ENCODE measurements at regions of chr2 and their contacts with region 1.

Region 1: GRCh38 chr2:226320076-226320948 is 479.3 kb downstream of the IRS1 start:
- DNase-seq: peak; percentile 69 to 85
- ATAC-seq: peak; percentile 98 to 99
- H3K4me3 ChIP-seq: peak overlapping the region in 3 of 4 donors; percentile 27 to 43 (median 29)
- H3K27ac ChIP-seq: peak overlapping the region; percentile 81 to 91 (median 86)
- H3K4me1 ChIP-seq: peaks cover 21 to 26% of the 10 kb centered on the region in 2 donors
- H3K27me3 ChIP-seq: no peaks in the 10 kb centered on the region
- CTCF ChIP-seq: peak in 4 of 5 experiments; percentile 20 to 64 (median 42)
- POLR2A ChIP-seq: no peak

Region 2: GRCh38 chr2:226137201-226137811 is 183.0 kb before region 1 on chr2:
- in situ Hi-C with region 1: no loop called
- intact Hi-C with region 1: loop called (anchors 5 kb)
- DNase-seq: no peak
- ATAC-seq: no peak
- H3K4me3 ChIP-seq: no peak overlapping the region
- H3K27ac ChIP-seq: peak overlapping the region in 1 of 4 donors; percentile 13
- H3K4me1 ChIP-seq: peaks cover 12 to 20% of the 10 kb centered on the region in 2 donors
- H3K27me3 ChIP-seq: no peaks in the 10 kb centered on the region
- CTCF ChIP-seq: no peak
- POLR2A ChIP-seq: no peak

Region 3: DNA sequence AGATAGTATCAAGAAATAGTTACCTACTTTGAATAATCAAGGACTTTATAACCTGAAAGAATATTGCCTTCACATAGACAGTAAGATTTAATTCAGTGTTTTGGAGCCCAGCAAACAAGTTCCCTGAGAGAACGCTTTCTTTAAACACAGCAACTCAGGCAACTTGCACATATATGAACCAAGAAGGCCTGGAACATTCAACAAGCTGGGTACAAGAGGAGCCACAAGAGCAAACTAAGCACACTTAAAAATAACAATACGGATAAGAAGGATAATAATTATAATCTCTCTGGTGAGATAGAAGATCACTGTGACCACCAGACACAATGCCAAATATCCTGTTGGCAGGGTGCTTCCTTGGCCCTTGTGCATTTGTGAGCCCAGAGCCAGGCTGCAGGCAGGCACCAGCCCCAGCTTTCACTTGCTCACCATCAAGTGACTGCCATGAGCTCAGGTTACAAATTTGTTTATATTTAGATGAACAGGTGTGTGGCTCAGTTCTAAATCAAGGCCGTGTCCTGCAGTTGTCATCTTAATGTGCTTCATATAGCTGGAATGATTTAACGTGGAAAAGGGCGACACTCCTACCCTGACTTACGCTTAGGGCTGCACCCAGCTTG is 32.7 kb after region 1 on chr2:
- in situ Hi-C with region 1: no loop called
- intact Hi-C with region 1: loop called (anchors 1 kb)
- DNase-seq: peak; percentile 63 to 78
- ATAC-seq: peak; percentile 98 to 99
- H3K4me3 ChIP-seq: no peak overlapping the region
- H3K27ac ChIP-seq: peak overlapping the region; percentile 72 to 84 (median 73)
- H3K4me1 ChIP-seq: peaks cover 20% of the 10 kb centered on the region in 2 donors
- H3K27me3 ChIP-seq: no peaks in the 10 kb centered on the region
- CTCF ChIP-seq: no peak
- POLR2A ChIP-seq: no peak

Region 4: DNA sequence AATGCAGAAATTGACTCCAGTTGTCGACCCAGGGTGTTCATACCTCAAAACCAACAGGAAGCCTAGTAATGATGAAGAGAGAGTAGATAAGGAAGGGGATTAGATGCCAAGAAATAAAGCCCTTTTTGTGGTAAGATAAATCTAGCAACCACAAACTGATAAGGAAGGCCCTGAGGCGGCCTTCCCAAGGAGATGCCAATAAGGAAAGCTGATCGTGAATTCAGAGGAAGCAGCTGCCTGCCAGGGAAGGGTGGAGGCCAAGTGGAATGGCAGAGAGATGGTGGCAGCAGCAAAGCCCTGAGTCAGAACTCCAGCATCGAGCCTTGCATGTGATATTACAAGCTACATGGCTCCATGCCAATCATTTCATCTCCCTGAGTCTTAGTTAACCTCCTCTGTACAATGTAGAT is 353.0 kb after region 1 on chr2:
- in situ Hi-C with region 1: no loop called
- intact Hi-C with region 1: no loop called
- DNase-seq: peak; percentile 61 to 66
- ATAC-seq: peak; percentile 85 to 87
- H3K4me3 ChIP-seq: no peak overlapping the region
- H3K27ac ChIP-seq: peak overlapping the region; percentile 20 to 70 (median 46)
- H3K4me1 ChIP-seq: peaks cover 26 to 34% of the 10 kb centered on the region in 2 donors
- H3K27me3 ChIP-seq: no peaks in the 10 kb centered on the region
- CTCF ChIP-seq: no peak
- POLR2A ChIP-seq: no peak

Measured in gastrocnemius medialis (tissue), 4 donors.